ENCODE measurements at regions of chr15 and their contacts with region 1.

Region 1: DNA sequence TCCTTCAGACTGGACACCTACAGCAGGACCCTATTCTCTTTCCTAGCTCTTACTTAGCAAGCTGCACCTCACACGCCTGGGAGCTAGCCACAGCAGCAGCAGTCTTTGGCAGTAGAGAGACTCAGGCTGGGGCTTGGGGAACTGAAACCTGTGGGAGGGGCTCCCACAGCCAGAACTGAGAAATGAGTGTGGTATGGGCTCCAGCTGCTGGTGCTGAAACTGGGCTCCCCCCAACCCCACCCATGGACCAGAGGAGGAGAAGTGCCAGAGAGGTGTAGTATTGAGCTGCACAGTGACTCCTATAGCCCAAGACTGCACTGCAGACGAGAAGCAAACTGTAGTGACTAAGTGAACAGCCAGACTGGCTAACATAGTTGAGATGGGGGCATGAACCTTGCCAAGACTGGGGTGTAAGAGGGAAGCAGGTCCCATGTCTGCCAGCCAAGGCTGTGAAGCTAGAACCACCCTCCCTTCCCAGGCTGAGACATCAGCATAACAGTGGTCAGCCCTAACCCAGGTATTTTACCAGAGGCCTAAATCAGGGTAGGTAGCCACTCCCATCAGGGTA is 62.5 kb downstream of the MYO5A start:
- DNase-seq: peak; percentile 97
- ATAC-seq: peak; percentile 94
- H3K4me3 ChIP-seq: peak overlapping the region; percentile 58; the same call in 1 of the 2 replicates
- H3K27ac ChIP-seq: peak overlapping the region; percentile 99
- H3K4me1 ChIP-seq: peaks cover 47% of the 10 kb centered on the region
- H3K27me3 ChIP-seq: no peaks in the 10 kb centered on the region
- CTCF ChIP-seq: peak; percentile 55 to 66 (median 66)
- EP300 ChIP-seq: peak; percentile 91 to 98
- POLR2A ChIP-seq: peak; percentile 69
- RAD21 ChIP-seq: peak; percentile 70

Region 2: DNA sequence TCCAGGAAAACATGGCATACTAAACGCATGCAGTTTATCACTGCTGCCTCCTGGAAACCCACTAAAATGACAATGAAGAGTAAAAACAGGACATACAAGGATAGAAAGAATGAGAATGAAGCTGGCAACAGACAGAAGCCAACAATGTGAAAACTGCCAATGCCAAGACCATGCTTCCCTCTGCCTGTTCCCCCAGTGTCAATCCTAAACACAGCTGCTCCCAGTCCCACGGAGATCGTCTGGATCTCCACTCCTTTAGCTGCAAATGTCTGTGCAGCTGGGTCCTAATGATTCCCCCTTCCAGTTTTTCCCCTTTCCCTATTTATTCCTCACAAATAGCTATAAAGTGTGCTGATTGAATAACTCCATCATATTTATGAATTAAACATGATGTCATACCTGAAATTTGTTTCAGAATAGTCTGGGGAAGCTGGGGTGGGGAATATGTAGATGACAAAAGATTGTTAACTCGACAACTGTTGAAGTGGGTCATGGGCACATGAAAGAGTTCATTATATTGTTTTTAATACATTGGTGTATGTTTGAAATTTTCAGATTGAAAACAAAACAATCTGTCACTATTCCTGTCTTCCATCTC is 510.6 kb before region 1 on chr15:
- CTCF ChIA-PET with region 1: no interaction called
- POLR2A ChIA-PET with region 1: no interaction called
- RAD21 ChIA-PET with region 1: no interaction called
- SMC1A ChIA-PET with region 1: no interaction called
- in situ Hi-C with region 1: no loop called
- intact Hi-C with region 1: no loop called
- DNase-seq: no peak
- ATAC-seq: no peak
- H3K4me3 ChIP-seq: no peak overlapping the region
- H3K27ac ChIP-seq: no peak overlapping the region
- H3K4me1 ChIP-seq: no peaks in the 10 kb centered on the region
- H3K27me3 ChIP-seq: no peaks in the 10 kb centered on the region
- CTCF ChIP-seq: no peak
- EP300 ChIP-seq: no peak
- POLR2A ChIP-seq: no peak
- RAD21 ChIP-seq: no peak

Region 3: GRCh38 chr15:52331490-52332240 is 134.6 kb before region 1 on chr15:
- CTCF ChIA-PET with region 1: interaction called, 42 read pairs
- POLR2A ChIA-PET with region 1: interaction called, 4 read pairs
- RAD21 ChIA-PET with region 1: interaction called, 43 read pairs
- SMC1A ChIA-PET with region 1: interaction called, 81 read pairs
- in situ Hi-C with region 1: no loop called
- intact Hi-C with region 1: loop called (anchors 2 kb)
- DNase-seq: peak; percentile 87
- ATAC-seq: peak; percentile 99
- H3K4me3 ChIP-seq: no peak overlapping the region
- H3K27ac ChIP-seq: peak overlapping the region; percentile 22
- H3K4me1 ChIP-seq: peaks cover 15% of the 10 kb centered on the region
- H3K27me3 ChIP-seq: no peaks in the 10 kb centered on the region
- CTCF ChIP-seq: peak; percentile 59 to 90 (median 78)
- EP300 ChIP-seq: no peak
- POLR2A ChIP-seq: no peak
- RAD21 ChIP-seq: peak; percentile 96

Region 4: GRCh38 chr15:52379395-52380106 is 86.7 kb before region 1 on chr15:
- CTCF ChIA-PET with region 1: interaction called, 46 read pairs
- POLR2A ChIA-PET with region 1: interaction called, 16 read pairs
- RAD21 ChIA-PET with region 1: interaction called, 59 read pairs
- SMC1A ChIA-PET with region 1: interaction called, 56 read pairs
- in situ Hi-C with region 1: no loop called
- intact Hi-C with region 1: loop called (anchors 2 kb)
- DNase-seq: peak; percentile 91
- ATAC-seq: peak; percentile 71
- H3K4me3 ChIP-seq: peak overlapping the region; percentile 60
- H3K27ac ChIP-seq: peak overlapping the region; percentile 98
- H3K4me1 ChIP-seq: peaks cover 54% of the 10 kb centered on the region
- H3K27me3 ChIP-seq: no peaks in the 10 kb centered on the region
- CTCF ChIP-seq: 0 out of 6 replicates have a peak, but pooled peaks of 1 of the 3 experiments have one; percentile 6
- EP300 ChIP-seq: peak; percentile 42 to 68; a peak in 3 of 4 replicates
- POLR2A ChIP-seq: peak; percentile 56
- RAD21 ChIP-seq: no peak

Region 5: DNA sequence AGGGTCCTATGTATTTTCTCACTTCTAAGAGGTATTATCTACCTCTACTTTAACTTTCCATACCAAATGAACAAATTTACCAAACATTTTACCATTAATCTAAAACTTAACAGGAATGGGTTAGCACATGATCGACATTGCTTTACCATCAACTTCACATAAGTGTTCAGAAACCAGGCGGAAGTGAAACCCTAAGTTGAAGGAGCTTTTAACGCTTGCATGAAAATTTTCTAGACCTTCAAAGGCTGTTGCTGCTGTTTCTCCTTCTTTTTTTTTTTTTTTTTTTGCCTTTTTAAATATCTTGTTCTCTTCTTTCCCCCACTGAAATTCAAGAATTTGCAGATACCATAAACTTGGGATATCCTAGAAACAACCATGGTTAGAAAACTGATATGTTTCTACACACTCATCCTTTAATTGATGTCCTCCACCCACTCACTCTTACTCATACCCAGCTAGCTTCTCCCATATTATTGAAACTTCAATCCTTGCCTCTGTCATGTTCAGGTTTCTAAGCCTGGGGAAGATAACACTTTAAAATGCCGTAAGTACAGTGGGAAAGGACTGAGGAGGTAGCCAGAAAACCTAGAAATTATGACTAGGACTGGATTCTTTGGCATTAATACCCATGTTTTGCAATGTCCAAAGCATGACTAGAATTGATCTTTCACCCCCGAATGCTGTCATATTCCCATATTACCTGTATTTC is 37.7 kb after region 1 on chr15:
- CTCF ChIA-PET with region 1: interaction called, 3 read pairs
- POLR2A ChIA-PET with region 1: no interaction called
- RAD21 ChIA-PET with region 1: interaction called, 3 read pairs
- SMC1A ChIA-PET with region 1: interaction called, 24 read pairs
- in situ Hi-C with region 1: no loop called
- intact Hi-C with region 1: loop called (anchors 5 kb)
- DNase-seq: peak; percentile 51
- ATAC-seq: peak; percentile 86
- H3K4me3 ChIP-seq: peak overlapping the region; percentile 39; the same call in 1 of the 2 replicates
- H3K27ac ChIP-seq: peak overlapping the region; percentile 62; the same call in 1 of the 2 replicates
- H3K4me1 ChIP-seq: peaks cover 6% of the 10 kb centered on the region
- H3K27me3 ChIP-seq: no peaks in the 10 kb centered on the region
- CTCF ChIP-seq: no peak
- EP300 ChIP-seq: no peak
- POLR2A ChIP-seq: no peak
- RAD21 ChIP-seq: no peak

Region 6: GRCh38 chr15:52558196-52558595 is 92.0 kb after region 1 on chr15:
- CTCF ChIA-PET with region 1: interaction called, 10 read pairs
- POLR2A ChIA-PET with region 1: interaction called, 4 read pairs
- RAD21 ChIA-PET with region 1: interaction called, 42 read pairs
- SMC1A ChIA-PET with region 1: interaction called, 9 read pairs
- in situ Hi-C with region 1: no loop called
- intact Hi-C with region 1: no loop called
- DNase-seq: peak; percentile 84
- ATAC-seq: peak; percentile 83
- H3K4me3 ChIP-seq: peak overlapping the region; percentile 50; the same call in 1 of the 2 replicates
- H3K27ac ChIP-seq: peak overlapping the region; percentile 85
- H3K4me1 ChIP-seq: peaks cover 33% of the 10 kb centered on the region
- H3K27me3 ChIP-seq: no peaks in the 10 kb centered on the region
- CTCF ChIP-seq: no peak
- EP300 ChIP-seq: no peak
- POLR2A ChIP-seq: no peak
- RAD21 ChIP-seq: no peak

Region 7: GRCh38 chr15:52730173-52730572 is 264.0 kb after region 1 on chr15:
- CTCF ChIA-PET with region 1: interaction called, 4 read pairs
- POLR2A ChIA-PET with region 1: interaction called, 3 read pairs
- RAD21 ChIA-PET with region 1: interaction called, 15 read pairs
- SMC1A ChIA-PET with region 1: interaction called, 15 read pairs
- in situ Hi-C with region 1: no loop called
- intact Hi-C with region 1: loop called (anchors 5 kb)
- DNase-seq: peak; percentile 28
- ATAC-seq: peak; percentile 80
- H3K4me3 ChIP-seq: no peak overlapping the region; the same call in 1 of the 2 replicates
- H3K27ac ChIP-seq: no peak overlapping the region
- H3K4me1 ChIP-seq: peaks cover 9% of the 10 kb centered on the region; the same call in 1 of the 2 replicates
- H3K27me3 ChIP-seq: no peaks in the 10 kb centered on the region
- CTCF ChIP-seq: 0 out of 6 replicates have a peak, but pooled peaks of 1 of the 3 experiments have one; percentile 6
- EP300 ChIP-seq: no peak
- POLR2A ChIP-seq: no peak
- RAD21 ChIP-seq: peak; percentile 36; the same call in 1 of the 2 replicates